CD8-positive, alpha-beta T cell (primary cell): ENCODE measurements at regions of chr2 and their contacts with region 1.

Region 1: DNA sequence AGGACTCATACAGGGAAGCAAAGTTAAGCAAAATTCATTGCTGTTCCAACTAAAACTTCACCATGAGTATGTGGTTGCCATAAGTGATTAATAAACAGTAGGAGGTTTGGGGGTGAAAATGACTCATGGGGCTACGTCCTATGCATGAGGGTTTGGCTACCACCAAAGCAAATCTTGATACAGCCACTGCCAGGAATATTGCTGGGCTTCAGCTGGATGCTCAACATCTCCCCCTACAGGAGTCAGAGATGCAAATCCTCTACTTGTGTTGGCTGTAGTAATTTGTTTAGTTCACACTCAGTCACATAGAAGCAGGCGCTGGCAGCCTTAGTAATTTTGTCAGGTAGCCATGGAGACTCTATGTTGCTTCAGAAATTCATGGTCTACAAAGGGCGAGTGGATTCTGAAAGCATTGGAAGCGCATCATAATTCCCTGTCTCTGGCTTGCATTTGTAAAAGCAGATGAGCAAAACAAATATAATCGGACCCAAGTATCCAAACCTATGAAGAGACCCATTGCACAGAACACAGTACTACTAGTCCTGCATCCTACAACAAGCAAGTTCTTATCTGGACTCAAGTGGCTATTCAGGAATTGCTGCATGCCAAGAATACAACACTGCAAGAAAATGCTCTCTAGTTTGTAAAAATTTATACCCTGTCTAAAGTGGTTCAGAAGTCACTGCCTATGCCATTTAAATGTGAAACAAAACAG is 76.0 kb downstream of the CD28 start:
- DNase-seq: peak; percentile 28 to 87 (median 63)
- ATAC-seq: peak; percentile 91
- H3K4me3 ChIP-seq: no peak overlapping the region
- H3K4me3 Mint-ChIP-seq: no peak overlapping the region
- H3K27ac ChIP-seq: no peak overlapping the region
- H3K27ac Mint-ChIP-seq: peak overlapping the region; percentile 87
- H3K4me1 ChIP-seq: peaks cover 24% of the 10 kb centered on the region
- H3K4me1 Mint-ChIP-seq: peaks cover 44% of the 10 kb centered on the region
- H3K27me3 ChIP-seq: no peaks in the 10 kb centered on the region
- H3K27me3 Mint-ChIP-seq: no peaks in the 10 kb centered on the region
- CTCF ChIP-seq: peak; percentile 69

Region 2: GRCh38 chr2:203484266-203485112 is 297.9 kb before region 1 on chr2:
- CTCF ChIA-PET with region 1: interaction called, 10 read pairs
- POLR2A ChIA-PET with region 1: no interaction called
- intact Hi-C with region 1: loop called (anchors 1 kb)
- DNase-seq: peak; percentile 27 to 77 (median 48)
- ATAC-seq: peak; percentile 88
- H3K4me3 ChIP-seq: no peak overlapping the region
- H3K4me3 Mint-ChIP-seq: no peak overlapping the region
- H3K27ac ChIP-seq: no peak overlapping the region
- H3K27ac Mint-ChIP-seq: no peak overlapping the region
- H3K4me1 ChIP-seq: peaks cover 4% of the 10 kb centered on the region
- H3K4me1 Mint-ChIP-seq: peaks cover 7% of the 10 kb centered on the region
- H3K27me3 ChIP-seq: no peaks in the 10 kb centered on the region
- H3K27me3 Mint-ChIP-seq: no peaks in the 10 kb centered on the region
- CTCF ChIP-seq: peak; percentile 83

Region 3: DNA sequence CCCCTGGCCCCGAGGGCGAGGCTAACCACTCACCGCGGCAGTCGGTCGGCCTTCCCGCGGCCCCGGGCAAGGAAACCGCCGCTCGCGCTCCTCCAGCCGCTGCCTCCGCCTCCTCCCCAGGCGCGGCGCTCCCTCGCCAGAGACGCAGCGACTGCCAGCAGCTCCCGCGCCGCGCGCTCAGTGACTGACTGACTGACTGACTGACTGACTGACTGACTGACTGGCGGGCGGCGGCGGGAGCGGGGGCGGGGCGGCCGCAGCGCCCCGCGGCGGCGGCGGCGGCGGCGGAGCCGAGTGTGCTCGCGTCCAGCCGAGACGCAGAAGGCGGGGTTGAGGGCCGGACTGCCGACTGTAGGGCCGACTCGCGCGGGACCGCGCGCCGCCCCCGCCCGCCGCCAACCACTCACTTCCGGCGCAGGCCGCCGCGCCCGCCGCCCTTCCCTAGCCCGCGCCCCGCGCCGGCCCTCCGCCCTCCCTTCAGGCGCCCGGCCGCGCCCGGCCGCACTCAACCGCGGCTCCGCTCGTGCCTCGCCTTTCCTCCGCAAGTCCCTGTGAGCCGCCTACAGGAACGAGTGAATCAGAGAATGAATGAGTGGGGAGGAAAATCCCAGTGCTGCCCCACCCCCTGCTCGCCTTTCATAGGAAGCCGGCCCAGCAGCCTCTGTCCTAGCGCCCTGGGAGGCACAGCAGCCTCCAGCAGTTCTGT is 247.2 kb before region 1 on chr2 and contains the start of gene RAPH1:
- CTCF ChIA-PET with region 1: interaction called, 3 read pairs
- POLR2A ChIA-PET with region 1: no interaction called
- intact Hi-C with region 1: loop called (anchors 5 kb)
- DNase-seq: peak; percentile 3 to 65 (median 54)
- ATAC-seq: peak; percentile 62
- H3K4me3 ChIP-seq: peak within 1 kb of the TSS; percentile 49 to 50
- H3K4me3 Mint-ChIP-seq: peak within 1 kb of the TSS; percentile 86
- H3K27ac ChIP-seq: no peak within 1 kb of the TSS
- H3K27ac Mint-ChIP-seq: no peak within 1 kb of the TSS
- H3K4me1 ChIP-seq: peaks cover 15% of the 10 kb centered on the region
- H3K4me1 Mint-ChIP-seq: peaks cover 27% of the 10 kb centered on the region
- H3K27me3 ChIP-seq: peaks cover 0 to 7% of the 10 kb centered on the region in 2 experiments
- H3K27me3 Mint-ChIP-seq: peaks cover 28% of the 10 kb centered on the region
- CTCF ChIP-seq: no peak
- total RNA-seq, gene RAPH1: 1.8 to 1.9 TPM

Region 4: GRCh38 chr2:203650860-203651613 is 131.4 kb before region 1 on chr2:
- CTCF ChIA-PET with region 1: no interaction called
- POLR2A ChIA-PET with region 1: no interaction called
- intact Hi-C with region 1: loop called in 1 of 2 experiments (anchors 5 kb)
- DNase-seq: peak in 2 of 9 experiments; percentile 19 to 38
- ATAC-seq: no peak
- H3K4me3 ChIP-seq: no peak overlapping the region
- H3K4me3 Mint-ChIP-seq: no peak overlapping the region
- H3K27ac ChIP-seq: no peak overlapping the region
- H3K27ac Mint-ChIP-seq: no peak overlapping the region
- H3K4me1 ChIP-seq: no peaks in the 10 kb centered on the region
- H3K4me1 Mint-ChIP-seq: peaks cover 19% of the 10 kb centered on the region
- H3K27me3 ChIP-seq: no peaks in the 10 kb centered on the region
- H3K27me3 Mint-ChIP-seq: no peaks in the 10 kb centered on the region
- CTCF ChIP-seq: no peak

Region 5: DNA sequence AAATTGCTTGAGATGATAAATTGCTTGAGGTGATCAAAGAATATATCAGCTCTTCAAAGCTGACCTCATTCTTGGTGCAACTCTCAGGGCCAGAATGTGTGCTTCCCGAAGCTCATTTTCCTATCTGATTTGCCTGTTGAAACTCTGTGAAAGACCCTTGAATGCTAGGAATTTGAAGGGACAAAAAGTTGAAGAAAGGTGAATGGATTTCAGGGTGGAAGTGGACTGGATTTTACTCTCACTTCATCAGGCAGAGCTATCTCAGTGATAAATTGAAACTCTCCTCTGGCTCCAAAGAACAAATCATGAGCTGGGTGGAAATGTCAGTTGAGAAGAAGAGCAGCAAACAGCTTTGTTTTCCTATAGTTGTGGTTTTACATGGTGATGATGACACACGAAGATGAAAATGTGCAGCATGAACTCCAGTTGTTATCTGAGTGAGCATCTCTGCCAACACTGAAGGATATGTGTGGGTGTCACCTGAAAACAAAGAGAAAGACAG is 41.6 kb before region 1 on chr2:
- CTCF ChIA-PET with region 1: interaction called, 3 read pairs
- POLR2A ChIA-PET with region 1: interaction called, 7 read pairs
- intact Hi-C with region 1: loop called (anchors 5 kb)
- DNase-seq: peak in 6 of 9 experiments; percentile 22 to 89 (median 48)
- ATAC-seq: peak; percentile 83
- H3K4me3 ChIP-seq: no peak overlapping the region
- H3K4me3 Mint-ChIP-seq: peak overlapping the region; percentile 70
- H3K27ac ChIP-seq: peak overlapping the region; percentile 63 to 77
- H3K27ac Mint-ChIP-seq: peak overlapping the region; percentile 95
- H3K4me1 ChIP-seq: peaks cover 67% of the 10 kb centered on the region
- H3K4me1 Mint-ChIP-seq: peaks cover 82% of the 10 kb centered on the region
- H3K27me3 ChIP-seq: no peaks in the 10 kb centered on the region
- H3K27me3 Mint-ChIP-seq: no peaks in the 10 kb centered on the region
- CTCF ChIP-seq: no peak

Region 6: GRCh38 chr2:203759690-203760365 is 22.6 kb before region 1 on chr2:
- CTCF ChIA-PET with region 1: no interaction called
- POLR2A ChIA-PET with region 1: no interaction called
- intact Hi-C with region 1: loop called in 1 of 2 experiments (anchors 2 kb)
- DNase-seq: no peak
- ATAC-seq: no peak
- H3K4me3 ChIP-seq: no peak overlapping the region
- H3K4me3 Mint-ChIP-seq: no peak overlapping the region
- H3K27ac ChIP-seq: no peak overlapping the region
- H3K27ac Mint-ChIP-seq: no peak overlapping the region
- H3K4me1 ChIP-seq: peaks cover 22% of the 10 kb centered on the region
- H3K4me1 Mint-ChIP-seq: peaks cover 51% of the 10 kb centered on the region
- H3K27me3 ChIP-seq: no peaks in the 10 kb centered on the region
- H3K27me3 Mint-ChIP-seq: no peaks in the 10 kb centered on the region
- CTCF ChIP-seq: no peak

Region 7: DNA sequence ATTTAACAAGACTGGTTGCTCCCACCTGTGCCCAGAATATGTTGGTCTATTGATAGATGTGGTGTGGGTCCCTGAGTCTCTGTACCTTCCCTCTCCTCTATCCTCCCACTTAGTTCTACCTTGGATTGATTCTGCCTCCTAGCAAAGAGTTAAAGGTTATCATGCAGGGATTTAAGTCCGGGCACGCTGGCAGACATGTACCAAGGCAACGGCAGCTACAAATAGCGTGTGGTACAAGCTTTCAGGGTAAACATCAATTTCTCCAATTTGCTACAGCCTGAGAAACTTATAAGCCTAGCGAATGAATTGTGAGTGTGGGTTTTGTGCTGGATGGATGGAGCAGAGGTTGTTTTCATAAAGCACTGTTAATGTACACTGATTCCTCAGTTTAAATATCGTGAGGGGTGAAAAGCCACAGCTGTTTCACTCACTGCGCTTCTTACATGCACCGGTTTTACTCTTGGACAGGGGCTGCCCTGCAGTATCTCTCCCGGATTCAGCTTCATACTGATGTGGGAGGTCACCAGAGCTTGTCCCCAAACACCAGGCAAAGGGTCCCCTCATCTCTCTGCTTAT is 444.0 kb after region 1 on chr2:
- CTCF ChIA-PET with region 1: no interaction called
- POLR2A ChIA-PET with region 1: no interaction called
- intact Hi-C with region 1: no loop called
- DNase-seq: no peak
- ATAC-seq: no peak
- H3K4me3 ChIP-seq: no peak overlapping the region
- H3K4me3 Mint-ChIP-seq: no peak overlapping the region
- H3K27ac ChIP-seq: no peak overlapping the region
- H3K27ac Mint-ChIP-seq: no peak overlapping the region
- H3K4me1 ChIP-seq: no peaks in the 10 kb centered on the region
- H3K4me1 Mint-ChIP-seq: no peaks in the 10 kb centered on the region
- H3K27me3 ChIP-seq: no peaks in the 10 kb centered on the region
- H3K27me3 Mint-ChIP-seq: peaks cover 16% of the 10 kb centered on the region
- CTCF ChIP-seq: no peak